HAP-1 (cell line): ENCODE measurements at regions of chr16 and their contacts with region 1.

Region 1: DNA sequence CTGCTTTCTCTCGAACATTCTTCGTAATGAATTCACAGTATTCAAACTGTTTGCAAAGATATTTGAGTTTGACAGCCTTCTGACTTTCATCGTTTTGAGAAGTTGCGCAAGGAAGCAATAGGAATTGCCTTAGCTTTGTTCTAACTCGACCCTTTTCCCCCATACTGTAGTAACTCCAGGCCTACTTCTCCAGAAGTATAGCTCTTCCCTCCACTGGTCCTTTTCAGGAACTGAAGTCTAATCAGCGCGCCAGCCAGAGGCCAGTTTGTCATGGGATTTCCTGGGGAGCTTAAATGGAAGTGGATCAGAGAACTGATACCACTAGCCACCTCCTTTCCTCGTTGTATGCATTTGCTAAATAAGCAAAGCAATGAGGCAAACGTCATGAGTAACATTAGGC is 27.9 kb downstream of the CDR2 start:
- DNase-seq: no peak
- H3K4me3 ChIP-seq: no peak overlapping the region
- H3K4me1 ChIP-seq: no peaks in the 10 kb centered on the region
- H3K27me3 ChIP-seq: no peaks in the 10 kb centered on the region

Region 2: DNA sequence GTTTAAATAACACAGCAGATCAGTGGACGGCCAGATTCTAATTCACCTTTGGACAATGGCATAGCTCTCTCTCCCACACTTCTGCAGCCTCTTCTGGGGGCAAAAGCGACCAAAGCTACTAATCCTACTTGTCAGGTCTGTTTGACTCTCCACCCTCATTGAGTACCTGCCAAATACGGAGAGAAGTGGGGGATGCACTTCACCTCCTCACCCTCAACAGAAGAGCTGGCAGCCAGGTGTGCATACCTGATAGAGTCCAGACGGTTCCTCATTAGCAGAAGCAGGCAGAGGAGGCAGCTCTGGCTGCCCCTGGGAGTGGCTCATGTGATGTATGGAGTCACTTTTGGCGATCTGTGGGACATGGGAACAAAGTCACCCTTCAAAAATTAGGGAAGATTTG is 1200.7 kb before region 1 on chr16:
- in situ Hi-C with region 1: loop called (anchors 25 kb)
- DNase-seq: no peak
- H3K4me3 ChIP-seq: no peak overlapping the region
- H3K4me1 ChIP-seq: no peaks in the 10 kb centered on the region
- H3K27me3 ChIP-seq: peaks cover 8% of the 10 kb centered on the region

Region 3: DNA sequence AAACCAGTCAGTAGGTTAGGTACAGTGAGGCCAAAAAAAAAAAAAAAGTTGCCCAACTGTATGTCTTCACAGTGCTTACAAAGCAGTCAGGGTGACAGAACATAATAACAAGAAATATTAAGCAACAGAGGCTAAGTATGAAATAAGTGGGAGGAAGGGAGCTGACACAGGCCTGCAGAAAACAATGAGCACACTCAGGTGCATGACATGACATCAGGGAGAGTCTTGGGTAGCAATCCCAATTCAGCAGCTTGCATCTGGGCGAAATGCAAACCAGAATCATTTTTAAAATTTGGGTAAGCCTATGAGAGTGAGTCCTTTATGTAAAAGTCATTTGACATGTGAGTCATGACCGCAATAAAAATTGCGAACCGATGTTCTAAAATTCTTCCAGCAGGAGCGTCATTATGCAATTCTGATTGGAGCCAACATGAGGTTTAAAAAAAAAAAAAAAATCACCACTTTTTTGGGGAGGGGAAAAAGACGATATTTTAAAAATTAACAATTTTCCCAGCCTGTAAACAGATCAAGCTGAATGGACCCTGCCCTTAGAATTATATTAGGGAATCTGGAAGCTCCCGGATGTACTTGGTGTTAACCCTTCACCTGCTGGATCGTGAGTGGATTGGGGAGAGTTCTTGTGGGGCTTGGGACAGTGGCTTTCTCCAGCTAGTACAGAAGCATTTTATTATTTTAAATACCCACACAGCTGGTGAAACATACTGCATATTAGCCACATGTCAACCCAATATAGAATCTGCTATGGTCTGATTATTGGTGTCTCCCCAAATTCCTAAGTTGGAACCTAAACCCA is 292.1 kb after region 1 on chr16:
- in situ Hi-C with region 1: no loop called
- DNase-seq: no peak
- H3K4me3 ChIP-seq: no peak overlapping the region
- H3K4me1 ChIP-seq: peaks cover 9% of the 10 kb centered on the region; the same call in 1 of the 2 replicates
- H3K27me3 ChIP-seq: peaks cover 3% of the 10 kb centered on the region; the same call in 1 of the 2 replicates

Region 4: GRCh38 chr16:22670551-22671041 is 324.1 kb after region 1 on chr16:
- in situ Hi-C with region 1: loop called (anchors 25 kb)
- DNase-seq: peak; percentile 46 to 78
- H3K4me3 ChIP-seq: no peak overlapping the region
- H3K4me1 ChIP-seq: no peaks in the 10 kb centered on the region
- H3K27me3 ChIP-seq: no peaks in the 10 kb centered on the region; the same call in 1 of the 2 replicates